Esophagus squamous epithelium (tissue), 5 donors: ENCODE measurements at regions of chr17 and their contacts with region 1.

Region 1: GRCh38 chr17:32136856-32137255 is 5.4 kb upstream of the RHOT1 start:
- DNase-seq: no peak
- H3K4me3 ChIP-seq: no peak overlapping the region
- H3K27ac ChIP-seq: no peak overlapping the region
- H3K4me1 ChIP-seq: peaks cover 0 to 20% (median 0%) of the 10 kb centered on the region in 3 donors
- H3K27me3 ChIP-seq: no peaks in the 10 kb centered on the region
- CTCF ChIP-seq: no peak
- POLR2A ChIP-seq: no peak

Region 2: DNA sequence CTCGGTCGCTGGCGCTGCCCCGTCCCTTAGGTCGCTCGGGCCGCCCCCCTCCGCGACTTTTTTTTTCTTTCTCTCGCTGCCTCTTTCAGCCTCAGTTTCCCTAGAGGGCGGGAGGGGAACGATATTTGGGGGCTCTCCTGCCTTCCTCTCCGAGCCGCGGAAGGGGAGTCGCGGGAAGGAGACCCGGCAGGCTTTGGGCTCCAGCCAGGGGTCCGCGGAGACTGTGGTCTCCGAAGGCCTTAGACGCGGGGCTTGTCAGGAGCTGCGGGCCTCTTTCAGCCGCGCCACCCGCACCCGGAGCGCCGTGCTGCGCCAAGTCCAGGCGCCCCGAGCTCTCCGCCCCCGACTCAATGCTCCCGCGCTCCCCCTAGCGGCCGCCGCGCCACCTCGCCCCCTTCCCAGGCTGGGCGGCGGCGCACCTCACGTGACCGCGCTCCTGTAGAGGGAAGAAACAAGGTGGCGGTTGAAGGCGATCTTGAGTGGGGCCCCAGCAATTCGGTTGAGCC is 129.8 kb before region 1 on chr17 and contains the start of gene LRRC37B:
- intact Hi-C with region 1: loop called (anchors 10 kb)
- DNase-seq: peak; percentile 28
- H3K4me3 ChIP-seq: peak within 1 kb of the TSS; percentile 81 to 99 (median 90)
- H3K27ac ChIP-seq: peak within 1 kb of the TSS; percentile 84 to 95 (median 91)
- H3K4me1 ChIP-seq: peaks cover 11 to 41% (median 14%) of the 10 kb centered on the region in 3 donors
- H3K27me3 ChIP-seq: no peaks in the 10 kb centered on the region
- CTCF ChIP-seq: peak; percentile 94 to 98 (median 97)
- POLR2A ChIP-seq: peak in 2 of 4 donors; percentile 32 to 46
- total RNA-seq, gene LRRC37B: 5.8 to 14.9 (median 9.7) TPM